ENCODE measurements at regions of chr1 and their contacts with region 1.

Region 1: GRCh38 chr1:204363335-204364124 is 3.8 kb upstream of the PLEKHA6 start:
- DNase-seq: peak; percentile 77 to 84 (median 83)
- ATAC-seq: peak; percentile 60 to 86 (median 80)
- H3K4me3 ChIP-seq: peak overlapping the region in 11 of 12 donors; percentile 15 to 60 (median 47)
- H3K27ac ChIP-seq: peak overlapping the region in 11 of 12 donors; percentile 42 to 76 (median 74)
- H3K4me1 ChIP-seq: peaks cover 5 to 35% (median 22%) of the 10 kb centered on the region in 12 donors
- H3K27me3 ChIP-seq: peaks cover 0 to 4% (median 0%) of the 10 kb centered on the region in 9 donors
- CTCF ChIP-seq: peak; percentile 92 to 99 (median 98)
- POLR2A ChIP-seq: no peak

Region 2: GRCh38 chr1:203861379-203862184 is 501.9 kb before region 1 on chr1 and contains the start of gene SNRPE:
- intact Hi-C with region 1: loop called in 6 of 10 experiments (anchors 1 to 10 kb)
- DNase-seq: peak; percentile 96 to 97 (median 96)
- ATAC-seq: peak; percentile 98 to 99 (median 98)
- H3K4me3 ChIP-seq: peak within 1 kb of the TSS; percentile 63 to 96 (median 81)
- H3K27ac ChIP-seq: peak within 1 kb of the TSS in 10 of 12 donors; percentile 46 to 76 (median 66)
- H3K4me1 ChIP-seq: peaks cover 0 to 25% (median 16%) of the 10 kb centered on the region in 12 donors
- H3K27me3 ChIP-seq: no peaks in the 10 kb centered on the region
- CTCF ChIP-seq: peak; percentile 85 to 99 (median 96)
- POLR2A ChIP-seq: peak in 1 of 2 donors; percentile 27
- total RNA-seq, gene SNRPE: 17.7 to 66.4 (median 48.6) TPM

Region 3: GRCh38 chr1:203996126-203996525 is 367.4 kb before region 1 on chr1:
- intact Hi-C with region 1: no loop called
- DNase-seq: no peak
- ATAC-seq: peak in 1 of 4 donors; percentile 16
- H3K4me3 ChIP-seq: no peak overlapping the region
- H3K27ac ChIP-seq: peak overlapping the region in 3 of 12 donors; percentile 1 to 46 (median 13)
- H3K4me1 ChIP-seq: peaks cover 0 to 29% (median 11%) of the 10 kb centered on the region in 12 donors
- H3K27me3 ChIP-seq: no peaks in the 10 kb centered on the region
- CTCF ChIP-seq: no peak
- POLR2A ChIP-seq: no peak

Region 4: DNA sequence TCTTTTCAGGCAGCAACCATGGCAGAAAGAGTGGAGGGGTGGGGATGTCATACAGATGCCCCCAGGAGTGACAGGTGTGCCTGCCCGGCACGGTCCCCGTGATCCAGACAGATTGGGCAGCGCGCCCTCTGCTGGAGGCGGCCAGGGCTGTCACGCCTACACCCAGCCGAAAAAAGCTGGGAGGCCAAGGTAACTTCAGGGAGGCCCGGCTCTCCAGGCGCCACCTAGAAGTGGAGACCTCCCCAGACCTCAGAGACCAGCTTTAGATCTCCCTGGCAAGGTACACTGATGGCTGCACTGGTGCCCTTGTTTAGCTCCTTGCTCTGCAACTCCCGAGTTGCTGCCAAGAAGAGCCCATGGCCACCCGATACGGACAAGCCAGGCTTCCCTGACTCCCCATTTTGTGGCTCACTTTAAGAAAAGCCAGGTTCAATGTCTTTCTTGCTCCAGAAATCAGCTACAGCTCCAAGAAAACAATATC is 156.4 kb before region 1 on chr1:
- intact Hi-C with region 1: loop called in 3 of 10 experiments (anchors 2 to 5 kb)
- DNase-seq: peak; percentile 48 to 86 (median 63)
- ATAC-seq: peak; percentile 78 to 91 (median 86)
- H3K4me3 ChIP-seq: no peak overlapping the region
- H3K27ac ChIP-seq: no peak overlapping the region
- H3K4me1 ChIP-seq: peaks cover 0 to 4% (median 0%) of the 10 kb centered on the region in 12 donors
- H3K27me3 ChIP-seq: peaks cover 0 to 28% (median 0%) of the 10 kb centered on the region in 9 donors
- CTCF ChIP-seq: peak; percentile 77 to 96 (median 89)
- POLR2A ChIP-seq: no peak

Region 5: GRCh38 chr1:204257954-204258752 is 105.4 kb before region 1 on chr1:
- intact Hi-C with region 1: loop called in 9 of 10 experiments (anchors 1 to 5 kb)
- DNase-seq: peak; percentile 53 to 79 (median 66)
- ATAC-seq: peak; percentile 48 to 72 (median 65)
- H3K4me3 ChIP-seq: no peak overlapping the region
- H3K27ac ChIP-seq: no peak overlapping the region
- H3K4me1 ChIP-seq: peaks cover 0 to 15% (median 3%) of the 10 kb centered on the region in 12 donors
- H3K27me3 ChIP-seq: no peaks in the 10 kb centered on the region
- CTCF ChIP-seq: peak; percentile 60 to 80 (median 65)
- POLR2A ChIP-seq: no peak

Region 6: DNA sequence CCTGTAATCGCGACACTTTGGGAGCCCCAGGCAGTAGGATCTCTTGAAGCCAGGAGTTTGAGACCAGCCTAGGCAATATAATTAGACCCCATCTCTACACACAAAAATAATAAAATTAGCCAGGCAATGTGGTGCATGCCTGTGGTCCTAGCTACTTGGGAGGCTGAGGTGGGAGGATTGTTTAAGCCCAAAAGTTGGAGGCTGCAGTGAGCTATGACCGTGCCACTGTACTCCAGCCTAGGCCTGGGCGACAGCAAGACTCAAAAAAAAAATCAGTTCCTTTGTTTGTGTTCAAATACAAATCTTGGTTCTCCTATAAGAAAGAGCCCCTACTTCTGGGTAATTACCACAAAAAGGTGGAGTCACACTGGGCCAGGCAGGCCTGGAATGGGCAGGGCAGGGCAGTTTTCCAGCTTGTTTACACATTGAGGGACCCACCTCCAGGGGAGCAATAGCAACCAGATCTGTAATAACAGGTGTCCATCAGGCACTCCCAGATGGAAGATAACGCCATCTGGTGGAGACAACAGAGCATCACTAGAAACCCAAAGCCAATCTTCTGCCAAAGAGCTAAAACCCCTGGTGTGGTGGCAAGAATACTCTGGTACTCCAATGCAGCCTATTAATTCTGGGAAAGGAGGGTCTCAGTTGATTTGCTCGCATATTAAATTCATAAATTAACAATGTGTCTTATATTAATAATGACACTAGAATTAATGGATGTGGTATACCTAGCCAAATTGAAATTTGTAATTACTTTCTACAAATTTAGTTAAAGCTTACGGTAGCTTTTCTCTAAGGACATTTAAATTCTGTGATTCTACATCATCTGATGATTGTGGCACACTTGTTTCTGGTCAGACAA is 34.9 kb after region 1 on chr1:
- intact Hi-C with region 1: loop called in 1 of 10 experiments (anchors 2 kb)
- DNase-seq: peak in 3 of 5 donors; percentile 35 to 46 (median 39)
- ATAC-seq: peak; percentile 52 to 80 (median 78)
- H3K4me3 ChIP-seq: no peak overlapping the region
- H3K27ac ChIP-seq: peak overlapping the region in 2 of 12 donors; percentile 30 to 40
- H3K4me1 ChIP-seq: no peaks in the 10 kb centered on the region
- H3K27me3 ChIP-seq: no peaks in the 10 kb centered on the region
- CTCF ChIP-seq: peak; percentile 69 to 86 (median 79)
- POLR2A ChIP-seq: no peak

Measured in heart left ventricle (tissue), 16 donors.